ENCODE measurements at regions of chr3 and their contacts with region 1.

Region 1: GRCh38 chr3:12891985-12892839 is 50.8 kb upstream of the RPL32 start:
- DNase-seq: peak in 8 of 9 donors; percentile 29 to 57 (median 50)
- ATAC-seq: peak; percentile 65
- H3K4me3 ChIP-seq: peak overlapping the region; percentile 19
- H3K4me3 Mint-ChIP-seq: peak overlapping the region in 9 of 10 donors; percentile 12 to 75 (median 58)
- H3K27ac ChIP-seq: no peak overlapping the region
- H3K27ac Mint-ChIP-seq: peak overlapping the region in 3 of 9 donors; percentile 9 to 47 (median 12)
- H3K4me1 ChIP-seq: peaks cover 0 to 7% of the 10 kb centered on the region in 2 donors
- H3K4me1 Mint-ChIP-seq: peaks cover 6 to 14% (median 12%) of the 10 kb centered on the region in 7 donors
- H3K27me3 ChIP-seq: no peaks in the 10 kb centered on the region
- H3K27me3 Mint-ChIP-seq: peaks cover 0 to 38% (median 14%) of the 10 kb centered on the region in 5 donors

Region 2: DNA sequence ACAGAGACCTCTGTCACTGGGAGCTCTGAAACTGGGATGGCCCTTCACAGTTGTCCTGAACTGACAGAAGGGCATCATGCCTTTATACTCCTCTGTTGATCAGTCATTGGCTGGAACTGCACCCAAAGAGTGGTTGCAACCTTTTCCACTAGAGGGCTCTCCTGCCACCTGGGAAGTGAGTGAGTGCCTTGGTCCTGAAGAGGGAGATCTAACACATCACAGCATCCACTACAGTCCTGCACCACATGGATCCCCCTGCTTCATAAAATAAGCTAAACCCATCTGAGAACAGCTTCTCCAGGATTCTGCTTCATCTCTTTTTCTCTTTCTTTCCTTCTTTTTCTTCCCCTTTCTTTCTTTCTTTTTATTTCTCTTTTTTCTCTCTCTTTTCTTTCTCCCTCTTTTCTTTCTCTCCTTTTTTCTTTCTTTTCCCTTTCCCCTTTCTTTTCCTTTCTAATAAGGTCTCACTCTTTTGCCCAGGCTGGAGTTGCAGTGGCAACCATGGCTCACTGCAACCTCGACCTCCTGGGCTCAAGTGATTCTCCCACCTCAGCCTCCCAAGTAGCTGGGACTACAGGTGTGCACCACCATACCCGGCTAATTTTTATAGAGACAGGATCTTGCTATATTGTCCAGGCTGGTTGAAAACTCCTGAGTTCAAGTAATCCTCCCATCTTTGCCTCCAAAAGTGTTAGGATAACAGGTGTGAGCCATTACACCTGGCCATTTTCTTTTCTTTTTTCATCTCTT is 185.5 kb before region 1 on chr3:
- CTCF ChIA-PET with region 1: no interaction called
- POLR2A ChIA-PET with region 1: no interaction called
- intact Hi-C with region 1: loop called in 1 of 2 experiments (anchors 1 kb)
- DNase-seq: peak; percentile 31 to 65 (median 49)
- ATAC-seq: peak; percentile 98
- H3K4me3 ChIP-seq: no peak overlapping the region
- H3K4me3 Mint-ChIP-seq: no peak overlapping the region
- H3K27ac ChIP-seq: no peak overlapping the region
- H3K27ac Mint-ChIP-seq: peak overlapping the region in 1 of 9 donors; percentile 36
- H3K4me1 ChIP-seq: no peaks in the 10 kb centered on the region
- H3K4me1 Mint-ChIP-seq: no peaks in the 10 kb centered on the region
- H3K27me3 ChIP-seq: no peaks in the 10 kb centered on the region
- H3K27me3 Mint-ChIP-seq: peaks cover 0 to 12% (median 0%) of the 10 kb centered on the region in 5 donors

Region 3: GRCh38 chr3:12782172-12782815 is 109.9 kb before region 1 on chr3:
- CTCF ChIA-PET with region 1: interaction called, 10 read pairs
- POLR2A ChIA-PET with region 1: interaction called, 3 read pairs
- intact Hi-C with region 1: loop called (anchors 1 kb)
- DNase-seq: no peak
- ATAC-seq: no peak
- H3K4me3 ChIP-seq: no peak overlapping the region
- H3K4me3 Mint-ChIP-seq: no peak overlapping the region
- H3K27ac ChIP-seq: no peak overlapping the region
- H3K27ac Mint-ChIP-seq: no peak overlapping the region
- H3K4me1 ChIP-seq: no peaks in the 10 kb centered on the region
- H3K4me1 Mint-ChIP-seq: no peaks in the 10 kb centered on the region
- H3K27me3 ChIP-seq: no peaks in the 10 kb centered on the region
- H3K27me3 Mint-ChIP-seq: peaks cover 0 to 28% (median 21%) of the 10 kb centered on the region in 5 donors

Region 4: DNA sequence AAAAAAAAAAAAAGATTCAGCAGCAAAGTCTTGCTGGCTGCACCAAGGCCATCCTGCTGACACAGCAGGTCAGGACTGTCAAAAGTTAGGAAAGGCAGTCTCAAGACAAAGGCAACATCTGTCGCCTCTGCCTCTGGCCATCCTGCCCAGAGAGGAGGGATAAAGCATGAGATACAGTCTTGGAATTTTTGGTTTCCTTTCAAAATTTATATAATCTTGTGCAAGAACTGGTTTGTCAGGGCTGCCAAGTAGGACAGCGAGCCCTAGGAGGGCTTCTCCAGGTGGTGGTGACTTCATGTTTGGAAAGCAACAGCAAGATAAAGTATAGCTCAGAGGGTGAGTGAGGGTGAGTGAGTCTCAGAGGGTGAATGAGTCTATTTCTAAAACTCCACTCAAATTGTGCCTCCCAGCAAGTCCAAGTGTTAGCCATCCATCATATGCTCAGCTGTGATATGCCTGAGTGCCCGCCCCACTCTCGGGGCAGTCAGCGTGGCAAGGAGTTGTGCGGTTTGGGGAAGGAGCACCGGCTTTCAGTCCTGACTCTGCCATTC is 38.9 kb before region 1 on chr3:
- CTCF ChIA-PET with region 1: no interaction called
- POLR2A ChIA-PET with region 1: no interaction called
- intact Hi-C with region 1: no loop called
- DNase-seq: no peak
- ATAC-seq: no peak
- H3K4me3 ChIP-seq: no peak overlapping the region
- H3K4me3 Mint-ChIP-seq: no peak overlapping the region
- H3K27ac ChIP-seq: no peak overlapping the region
- H3K27ac Mint-ChIP-seq: no peak overlapping the region
- H3K4me1 ChIP-seq: no peaks in the 10 kb centered on the region
- H3K4me1 Mint-ChIP-seq: no peaks in the 10 kb centered on the region
- H3K27me3 ChIP-seq: no peaks in the 10 kb centered on the region
- H3K27me3 Mint-ChIP-seq: peaks cover 0 to 14% (median 6%) of the 10 kb centered on the region in 5 donors

Region 5: DNA sequence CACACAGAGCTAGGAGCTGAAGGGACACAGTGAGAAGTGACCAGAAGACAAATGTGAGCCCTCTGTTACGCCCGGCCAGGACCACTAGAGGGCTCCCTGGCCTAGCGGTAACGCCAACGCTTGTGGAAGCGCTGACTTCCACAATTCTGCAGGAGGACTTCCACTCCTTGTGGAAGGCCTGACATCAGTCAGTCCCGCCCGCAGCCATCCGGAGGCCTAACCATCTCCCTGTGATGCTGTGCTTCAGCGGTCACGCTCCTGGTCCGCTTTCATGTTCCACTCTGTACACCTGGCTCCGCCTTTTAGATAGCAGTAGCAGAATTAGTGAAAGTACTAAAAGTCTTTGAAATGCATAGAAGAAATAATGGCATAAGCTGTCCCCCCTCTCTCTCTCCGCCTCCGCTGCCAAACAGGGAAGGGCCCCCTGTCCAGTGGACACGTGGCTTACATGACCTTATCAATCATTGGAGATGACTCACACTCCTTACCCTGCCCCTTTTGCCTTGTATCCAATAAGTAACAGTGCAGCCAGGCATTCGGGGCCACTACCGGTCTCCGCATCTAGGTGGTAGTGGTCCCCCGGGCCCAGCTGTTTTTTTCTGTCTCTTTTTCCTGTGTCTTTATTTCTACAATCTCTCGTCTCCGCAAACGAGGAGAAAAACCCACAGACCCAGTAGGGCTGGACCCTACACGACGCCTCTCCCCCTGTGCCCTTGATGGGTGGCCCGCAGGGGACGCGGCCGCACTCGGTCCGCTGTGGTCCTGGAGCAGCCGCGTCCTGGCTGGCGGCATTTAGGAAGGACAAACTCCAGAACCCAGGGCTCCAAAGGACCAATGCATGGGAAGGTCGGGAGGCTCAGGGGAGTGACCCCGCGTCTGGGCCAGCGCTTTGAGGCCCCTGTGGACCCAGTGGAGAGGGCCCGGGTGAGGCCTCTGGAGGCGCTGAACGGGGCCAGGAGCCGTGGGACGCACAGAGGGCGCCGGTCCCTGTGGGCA is 23.9 kb before region 1 on chr3:
- CTCF ChIA-PET with region 1: interaction called, 17 read pairs
- POLR2A ChIA-PET with region 1: no interaction called
- intact Hi-C with region 1: loop called (anchors 1 kb)
- DNase-seq: peak; percentile 32 to 68 (median 50)
- ATAC-seq: peak; percentile 87
- H3K4me3 ChIP-seq: peak overlapping the region; percentile 60
- H3K4me3 Mint-ChIP-seq: peak overlapping the region; percentile 79 to 92 (median 86)
- H3K27ac ChIP-seq: no peak overlapping the region
- H3K27ac Mint-ChIP-seq: peak overlapping the region in 2 of 9 donors; percentile 4 to 53
- H3K4me1 ChIP-seq: no peaks in the 10 kb centered on the region
- H3K4me1 Mint-ChIP-seq: peaks cover 0 to 14% (median 10%) of the 10 kb centered on the region in 7 donors
- H3K27me3 ChIP-seq: peaks cover 0 to 5% of the 10 kb centered on the region in 2 donors
- H3K27me3 Mint-ChIP-seq: peaks cover 9 to 35% (median 14%) of the 10 kb centered on the region in 5 donors

Region 6: DNA sequence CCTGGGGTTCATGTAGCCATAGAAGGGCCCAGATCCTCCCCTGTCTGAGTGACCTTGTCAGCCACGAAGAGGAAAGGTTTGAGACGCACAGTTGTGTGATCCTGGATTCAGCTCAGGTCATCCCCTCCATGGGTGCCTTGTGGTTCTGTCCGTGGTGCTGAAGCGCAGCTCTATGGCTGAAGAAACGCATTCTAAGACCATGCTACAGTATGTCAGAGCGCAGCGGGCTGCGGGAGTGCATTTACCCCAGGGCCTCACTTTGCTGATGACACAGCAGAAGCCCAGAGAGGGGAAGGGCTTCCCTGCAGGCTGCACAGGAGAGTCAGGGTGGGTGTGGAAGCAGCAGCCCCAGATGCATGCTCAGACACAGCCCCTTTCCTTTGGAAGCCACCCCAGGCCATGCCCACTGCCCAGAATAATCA is 249.8 kb after region 1 on chr3:
- CTCF ChIA-PET with region 1: no interaction called
- POLR2A ChIA-PET with region 1: no interaction called
- intact Hi-C with region 1: no loop called
- DNase-seq: peak in 1 of 9 donors; percentile 17
- ATAC-seq: no peak
- H3K4me3 ChIP-seq: no peak overlapping the region
- H3K4me3 Mint-ChIP-seq: no peak overlapping the region
- H3K27ac ChIP-seq: no peak overlapping the region
- H3K27ac Mint-ChIP-seq: no peak overlapping the region
- H3K4me1 ChIP-seq: no peaks in the 10 kb centered on the region
- H3K4me1 Mint-ChIP-seq: peaks cover 0 to 5% (median 0%) of the 10 kb centered on the region in 7 donors
- H3K27me3 ChIP-seq: no peaks in the 10 kb centered on the region
- H3K27me3 Mint-ChIP-seq: peaks cover 0 to 21% (median 8%) of the 10 kb centered on the region in 5 donors